B cell (primary cell): ENCODE measurements at regions of chr15 and their contacts with region 1.

Region 1: GRCh38 chr15:26651909-26652308 is 121.0 kb downstream of the GABRB3 start:
- DNase-seq: no peak
- ATAC-seq: no peak
- H3K4me3 ChIP-seq: no peak overlapping the region
- H3K4me3 Mint-ChIP-seq: no peak overlapping the region
- H3K27ac ChIP-seq: no peak overlapping the region
- H3K27ac Mint-ChIP-seq: no peak overlapping the region
- H3K4me1 ChIP-seq: no peaks in the 10 kb centered on the region
- H3K4me1 Mint-ChIP-seq: no peaks in the 10 kb centered on the region
- H3K27me3 ChIP-seq: no peaks in the 10 kb centered on the region
- H3K27me3 Mint-ChIP-seq: no peaks in the 10 kb centered on the region
- CTCF ChIP-seq: no peak

Region 2: GRCh38 chr15:26372706-26373105 is 279.2 kb before region 1 on chr15:
- CTCF ChIA-PET with region 1: no interaction called
- POLR2A ChIA-PET with region 1: no interaction called
- intact Hi-C with region 1: no loop called
- DNase-seq: no peak
- ATAC-seq: no peak
- H3K4me3 ChIP-seq: no peak overlapping the region
- H3K4me3 Mint-ChIP-seq: no peak overlapping the region
- H3K27ac ChIP-seq: no peak overlapping the region
- H3K27ac Mint-ChIP-seq: no peak overlapping the region
- H3K4me1 ChIP-seq: no peaks in the 10 kb centered on the region
- H3K4me1 Mint-ChIP-seq: no peaks in the 10 kb centered on the region
- H3K27me3 ChIP-seq: no peaks in the 10 kb centered on the region
- H3K27me3 Mint-ChIP-seq: no peaks in the 10 kb centered on the region
- CTCF ChIP-seq: no peak

Region 3: DNA sequence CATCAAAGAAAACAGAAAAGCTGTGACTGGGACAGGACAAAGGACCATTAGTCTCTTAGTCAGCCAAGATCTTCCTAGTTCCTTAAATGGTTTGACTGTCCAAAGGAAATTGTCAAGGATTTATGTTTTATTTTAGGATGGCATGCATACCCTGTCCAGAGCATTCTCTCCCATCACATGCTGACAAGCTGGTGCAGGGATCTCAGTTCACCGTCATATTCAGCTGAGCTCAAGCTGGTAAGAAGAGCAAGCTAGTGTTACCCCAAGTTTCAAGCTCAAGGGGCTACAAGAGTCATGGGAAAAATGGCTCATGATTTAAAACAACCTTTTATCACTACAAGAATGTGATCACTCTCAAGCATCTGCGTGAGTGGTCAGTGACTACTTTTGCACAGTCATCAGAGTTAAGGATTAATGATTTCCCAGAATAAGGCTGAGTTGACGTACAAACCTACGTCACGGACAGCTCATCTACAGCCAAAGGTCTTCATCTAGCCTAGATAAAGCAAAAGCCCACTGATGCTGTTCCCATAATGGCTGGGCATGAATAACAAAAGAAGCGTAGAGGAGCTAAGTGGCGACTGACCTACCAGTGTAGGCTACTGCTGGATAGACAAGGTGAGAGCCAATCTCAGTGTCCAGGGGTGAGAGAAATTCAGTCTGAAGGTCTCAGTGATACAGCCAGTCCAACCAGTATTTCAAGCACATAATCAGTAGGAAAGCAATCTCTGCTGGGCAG is 36.6 kb before region 1 on chr15:
- CTCF ChIA-PET with region 1: no interaction called
- POLR2A ChIA-PET with region 1: no interaction called
- intact Hi-C with region 1: loop called (anchors 1 kb)
- DNase-seq: no peak
- ATAC-seq: no peak
- H3K4me3 ChIP-seq: no peak overlapping the region
- H3K4me3 Mint-ChIP-seq: no peak overlapping the region
- H3K27ac ChIP-seq: no peak overlapping the region
- H3K27ac Mint-ChIP-seq: no peak overlapping the region
- H3K4me1 ChIP-seq: no peaks in the 10 kb centered on the region
- H3K4me1 Mint-ChIP-seq: no peaks in the 10 kb centered on the region
- H3K27me3 ChIP-seq: no peaks in the 10 kb centered on the region
- H3K27me3 Mint-ChIP-seq: no peaks in the 10 kb centered on the region
- CTCF ChIP-seq: no peak